ENCODE measurements at regions of chr2 and their contacts with region 1.

Region 1: DNA sequence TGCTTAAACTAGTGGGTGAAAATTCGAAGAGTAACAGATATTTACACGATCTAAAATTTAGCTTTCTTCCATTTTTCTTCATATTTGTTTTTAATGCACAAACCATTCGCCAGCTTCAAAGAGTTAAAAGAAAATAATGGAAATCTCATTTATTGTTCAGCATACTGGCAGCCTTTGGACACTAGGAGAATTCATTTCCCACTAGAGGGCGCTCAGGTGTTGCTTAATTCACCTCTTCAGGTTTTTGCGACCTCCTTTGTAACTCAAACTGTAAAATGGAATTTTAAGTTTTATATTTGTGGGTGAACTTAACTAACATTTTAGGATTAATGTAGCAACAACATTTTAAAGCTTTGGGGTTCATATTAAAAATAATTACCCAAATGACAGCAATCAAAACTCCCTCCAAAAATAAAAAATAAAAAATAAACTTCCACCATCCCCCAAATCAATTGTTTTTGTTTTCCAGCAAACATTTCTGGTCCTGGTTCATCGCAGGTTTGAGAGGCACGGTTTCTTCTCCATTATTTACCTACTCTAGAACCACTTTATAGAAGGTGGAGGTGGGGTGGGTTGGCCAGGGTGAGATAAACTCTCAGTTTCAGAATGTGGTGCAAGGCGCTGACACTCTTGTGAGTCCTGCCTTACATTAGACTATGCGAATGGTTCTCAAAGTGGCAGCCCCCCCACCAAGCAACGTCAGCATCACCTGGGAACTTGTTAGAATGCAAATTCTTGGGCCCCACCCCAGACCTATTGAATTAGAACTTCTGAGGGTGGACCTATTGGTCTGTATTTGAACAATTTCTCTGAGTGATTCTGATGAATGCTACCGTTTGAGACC is 24.7 kb upstream of the PNPT1 start:
- DNase-seq: peak; percentile 61
- ATAC-seq: no peak
- H3K4me3 ChIP-seq: no peak overlapping the region
- H3K4me3 Mint-ChIP-seq: no peak overlapping the region
- H3K27ac ChIP-seq: no peak overlapping the region
- H3K27ac Mint-ChIP-seq: no peak overlapping the region
- H3K4me1 ChIP-seq: no peaks in the 10 kb centered on the region
- H3K4me1 Mint-ChIP-seq: no peaks in the 10 kb centered on the region
- H3K27me3 ChIP-seq: peaks cover 0 to 5% (median under 1%) of the 10 kb centered on the region in 4 experiments
- H3K27me3 Mint-ChIP-seq: peaks cover 13% of the 10 kb centered on the region
- CTCF ChIP-seq: peak; percentile 96

Region 2: DNA sequence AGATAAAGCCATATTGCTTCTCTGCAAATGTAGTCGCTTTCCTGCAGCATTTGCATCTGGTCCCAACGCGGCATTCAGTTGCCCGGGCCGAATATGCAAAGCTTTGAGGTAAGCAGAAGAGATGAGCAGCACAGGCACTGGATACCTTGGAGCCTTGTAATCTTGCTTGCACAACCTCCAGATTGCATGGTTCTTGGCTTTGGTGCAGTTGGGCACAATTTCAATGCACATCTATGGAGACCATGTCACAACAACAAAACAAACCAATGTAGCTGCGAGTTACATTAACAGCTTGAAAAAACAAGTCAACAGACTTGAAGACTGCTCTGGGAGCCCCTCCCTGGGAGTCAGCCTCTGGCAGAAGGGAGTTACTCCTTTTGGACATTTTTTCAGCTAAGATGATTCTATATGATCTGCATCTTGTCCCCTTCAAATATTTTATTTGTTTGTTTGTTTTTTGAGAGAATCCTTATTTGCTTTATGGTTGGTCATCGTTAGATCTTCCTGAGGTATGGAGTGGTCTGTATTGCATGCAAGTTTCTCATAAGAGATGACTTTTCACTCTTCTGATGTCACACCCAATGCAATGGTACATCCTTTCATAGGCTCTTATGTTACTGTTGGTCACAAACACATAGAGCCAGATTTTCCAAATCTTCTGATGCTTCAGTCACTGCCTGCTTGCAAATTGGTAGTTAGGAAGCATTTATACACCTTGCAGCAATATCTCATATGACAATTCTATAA is 91.7 kb after region 1 on chr2:
- CTCF ChIA-PET with region 1: no interaction called
- POLR2A ChIA-PET with region 1: no interaction called
- intact Hi-C with region 1: no loop called
- DNase-seq: no peak
- ATAC-seq: no peak
- H3K4me3 ChIP-seq: no peak overlapping the region
- H3K4me3 Mint-ChIP-seq: no peak overlapping the region
- H3K27ac ChIP-seq: no peak overlapping the region
- H3K27ac Mint-ChIP-seq: no peak overlapping the region
- H3K4me1 ChIP-seq: no peaks in the 10 kb centered on the region
- H3K4me1 Mint-ChIP-seq: no peaks in the 10 kb centered on the region
- H3K27me3 ChIP-seq: no peaks in the 10 kb centered on the region
- H3K27me3 Mint-ChIP-seq: peaks cover 15% of the 10 kb centered on the region
- CTCF ChIP-seq: no peak

Region 3: DNA sequence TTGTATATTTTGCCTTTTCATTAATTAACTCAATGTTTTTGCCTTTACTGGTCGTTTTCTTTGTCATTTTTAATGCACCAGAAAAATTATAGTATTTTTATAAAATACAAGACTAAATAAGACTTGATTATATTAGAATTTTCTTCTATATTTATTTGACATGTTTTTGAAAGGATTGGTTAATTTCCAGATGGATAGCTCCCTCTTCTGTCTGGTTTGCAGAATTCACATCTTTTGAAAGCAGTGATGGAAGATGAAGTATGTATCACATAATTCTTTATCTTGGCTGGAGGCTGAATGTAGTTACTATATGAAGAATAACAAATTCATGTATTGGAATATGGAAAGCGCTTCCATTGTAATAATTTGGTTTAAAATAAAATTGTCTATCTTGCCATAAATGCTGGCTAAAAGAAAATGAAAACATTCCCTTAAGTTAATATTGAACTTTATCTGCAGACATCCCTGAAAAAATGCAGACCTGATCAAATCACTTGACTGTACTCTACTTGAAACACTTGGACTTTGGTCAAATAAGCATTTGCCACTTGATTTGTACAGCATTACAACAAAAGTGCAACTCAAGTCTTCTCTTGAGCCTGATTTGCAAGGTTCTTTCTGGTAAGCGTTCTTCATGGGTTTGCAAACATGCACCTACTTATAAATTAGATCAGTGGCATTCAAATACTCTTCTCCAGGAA is 291.5 kb after region 1 on chr2:
- CTCF ChIA-PET with region 1: interaction called, 3 read pairs
- POLR2A ChIA-PET with region 1: no interaction called
- intact Hi-C with region 1: loop called (anchors 2 kb)
- DNase-seq: no peak
- ATAC-seq: no peak
- H3K4me3 ChIP-seq: no peak overlapping the region
- H3K4me3 Mint-ChIP-seq: no peak overlapping the region
- H3K27ac ChIP-seq: no peak overlapping the region
- H3K27ac Mint-ChIP-seq: no peak overlapping the region
- H3K4me1 ChIP-seq: no peaks in the 10 kb centered on the region
- H3K4me1 Mint-ChIP-seq: no peaks in the 10 kb centered on the region
- H3K27me3 ChIP-seq: no peaks in the 10 kb centered on the region
- H3K27me3 Mint-ChIP-seq: peaks cover 7% of the 10 kb centered on the region
- CTCF ChIP-seq: peak; percentile 34

Region 4: GRCh38 chr2:57497489-57498096 is 1779.2 kb after region 1 on chr2:
- CTCF ChIA-PET with region 1: interaction called, 4 read pairs
- POLR2A ChIA-PET with region 1: no interaction called
- intact Hi-C with region 1: loop called (anchors 5 kb)
- DNase-seq: peak; percentile 38
- ATAC-seq: peak; percentile 33
- H3K4me3 ChIP-seq: no peak overlapping the region
- H3K4me3 Mint-ChIP-seq: no peak overlapping the region
- H3K27ac ChIP-seq: no peak overlapping the region
- H3K27ac Mint-ChIP-seq: no peak overlapping the region
- H3K4me1 ChIP-seq: no peaks in the 10 kb centered on the region
- H3K4me1 Mint-ChIP-seq: peaks cover 2% of the 10 kb centered on the region
- H3K27me3 ChIP-seq: no peaks in the 10 kb centered on the region
- H3K27me3 Mint-ChIP-seq: peaks cover 9% of the 10 kb centered on the region
- CTCF ChIP-seq: peak; percentile 82